Activated T-helper 2 cell treated with anti-CD3 and anti-CD28 coated beads, Interferon-gamma antibody, Interleukin-2, Interleukin-4, amounts not matched to agents 10 μg/mL and 5 μg/mL and 100 μg/mL, durations not matched to agents 14 hours and 24 hours and 36 hours (primary cell): ENCODE measurements at regions of chr11 and their contacts with region 1.

Region 1: GRCh38 chr11:12224537-12224893 is 114.1 kb downstream of the MICAL2 start:
- DNase-seq: peak; percentile 83
- H3K4me3 Mint-ChIP-seq: peak overlapping the region; percentile 51
- H3K27ac Mint-ChIP-seq: peak overlapping the region; percentile 91
- H3K4me1 Mint-ChIP-seq: peaks cover 54% of the 10 kb centered on the region
- H3K27me3 Mint-ChIP-seq: no peaks in the 10 kb centered on the region

Region 2: DNA sequence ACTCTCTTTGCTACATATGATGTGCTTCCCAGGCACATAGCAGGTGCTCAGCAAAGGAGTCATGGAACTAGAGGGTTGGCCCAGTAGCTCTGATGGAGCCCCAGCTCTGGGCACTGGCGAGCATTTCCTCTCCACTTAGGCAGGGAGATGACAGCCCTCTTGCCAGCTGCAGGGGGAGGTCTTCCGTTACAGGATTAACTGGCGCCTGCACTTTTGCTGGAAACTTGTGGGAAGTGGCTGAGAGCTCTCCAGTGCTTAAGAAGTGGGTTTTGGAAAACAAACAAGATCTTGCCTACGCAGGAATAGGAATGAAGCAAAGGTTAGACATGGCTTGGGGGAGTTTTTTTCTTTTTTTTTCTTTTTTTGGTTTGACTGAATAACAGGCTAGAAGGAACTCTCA is 38.6 kb before region 1 on chr11:
- intact Hi-C with region 1: loop called (anchors 1 kb)
- DNase-seq: no peak
- H3K4me3 Mint-ChIP-seq: no peak overlapping the region
- H3K27ac Mint-ChIP-seq: peak overlapping the region; percentile 44
- H3K4me1 Mint-ChIP-seq: peaks cover 71% of the 10 kb centered on the region
- H3K27me3 Mint-ChIP-seq: no peaks in the 10 kb centered on the region

Region 3: GRCh38 chr11:12195768-12196167 is 28.7 kb before region 1 on chr11:
- intact Hi-C with region 1: loop called (anchors 1 kb)
- DNase-seq: peak; percentile 64
- H3K4me3 Mint-ChIP-seq: peak overlapping the region; percentile 99
- H3K27ac Mint-ChIP-seq: peak overlapping the region; percentile 98
- H3K4me1 Mint-ChIP-seq: peaks cover 66% of the 10 kb centered on the region
- H3K27me3 Mint-ChIP-seq: no peaks in the 10 kb centered on the region

Region 4: DNA sequence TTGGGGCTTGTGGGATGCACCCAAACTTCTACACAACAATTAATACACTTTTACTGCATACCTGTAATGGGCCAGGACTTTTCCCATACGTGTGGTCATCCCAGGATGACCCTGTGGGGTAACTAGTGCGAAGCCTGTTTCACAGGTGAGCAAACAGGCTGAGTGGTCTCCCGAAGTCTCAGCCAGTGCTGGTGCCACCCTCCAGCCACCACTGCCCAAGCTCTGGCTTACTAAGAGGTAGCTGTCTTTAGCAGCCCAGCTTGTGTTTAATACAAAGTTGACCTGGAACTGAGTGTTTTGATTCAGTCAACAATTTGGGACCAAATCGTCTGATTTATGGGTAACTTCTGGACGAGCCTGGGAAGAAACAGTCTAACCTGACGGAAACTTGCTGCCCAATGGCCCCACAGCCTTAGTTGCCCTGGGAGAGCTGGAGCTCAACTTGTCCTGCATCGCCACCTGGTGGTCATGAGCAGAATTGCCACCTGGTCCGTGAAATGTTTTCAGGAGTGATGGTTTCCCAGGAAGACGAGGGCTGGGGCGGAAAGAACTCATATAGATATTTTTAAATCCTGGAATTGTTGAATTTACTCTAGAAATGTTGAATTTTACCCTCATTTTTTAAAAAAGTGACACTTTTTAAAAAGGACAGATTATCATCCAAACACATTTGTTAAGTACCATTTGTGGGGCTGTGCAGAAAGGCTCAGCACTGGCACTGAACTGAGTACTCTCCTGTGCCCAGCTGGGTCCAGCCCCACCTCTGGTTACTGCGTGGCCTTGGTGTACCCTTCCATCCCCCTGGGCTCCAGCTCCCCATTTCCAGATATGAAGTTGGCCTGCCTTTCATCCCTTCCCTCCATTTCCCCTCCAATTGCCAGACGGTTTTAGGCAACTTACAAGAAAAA is 57.3 kb after region 1 on chr11:
- intact Hi-C with region 1: no loop called
- DNase-seq: peak; percentile 60
- H3K4me3 Mint-ChIP-seq: no peak overlapping the region
- H3K27ac Mint-ChIP-seq: peak overlapping the region; percentile 74
- H3K4me1 Mint-ChIP-seq: peaks cover 20% of the 10 kb centered on the region
- H3K27me3 Mint-ChIP-seq: no peaks in the 10 kb centered on the region